Right ventricle myocardium inferior (tissue), 1 donor: ENCODE measurements at regions of chr5 and their contacts with region 1.

Region 1: GRCh38 chr5:43389679-43390329 is 22.4 kb downstream of the CCL28 start:
- DNase-seq: no peak
- ATAC-seq: peak; percentile 93

Region 2: DNA sequence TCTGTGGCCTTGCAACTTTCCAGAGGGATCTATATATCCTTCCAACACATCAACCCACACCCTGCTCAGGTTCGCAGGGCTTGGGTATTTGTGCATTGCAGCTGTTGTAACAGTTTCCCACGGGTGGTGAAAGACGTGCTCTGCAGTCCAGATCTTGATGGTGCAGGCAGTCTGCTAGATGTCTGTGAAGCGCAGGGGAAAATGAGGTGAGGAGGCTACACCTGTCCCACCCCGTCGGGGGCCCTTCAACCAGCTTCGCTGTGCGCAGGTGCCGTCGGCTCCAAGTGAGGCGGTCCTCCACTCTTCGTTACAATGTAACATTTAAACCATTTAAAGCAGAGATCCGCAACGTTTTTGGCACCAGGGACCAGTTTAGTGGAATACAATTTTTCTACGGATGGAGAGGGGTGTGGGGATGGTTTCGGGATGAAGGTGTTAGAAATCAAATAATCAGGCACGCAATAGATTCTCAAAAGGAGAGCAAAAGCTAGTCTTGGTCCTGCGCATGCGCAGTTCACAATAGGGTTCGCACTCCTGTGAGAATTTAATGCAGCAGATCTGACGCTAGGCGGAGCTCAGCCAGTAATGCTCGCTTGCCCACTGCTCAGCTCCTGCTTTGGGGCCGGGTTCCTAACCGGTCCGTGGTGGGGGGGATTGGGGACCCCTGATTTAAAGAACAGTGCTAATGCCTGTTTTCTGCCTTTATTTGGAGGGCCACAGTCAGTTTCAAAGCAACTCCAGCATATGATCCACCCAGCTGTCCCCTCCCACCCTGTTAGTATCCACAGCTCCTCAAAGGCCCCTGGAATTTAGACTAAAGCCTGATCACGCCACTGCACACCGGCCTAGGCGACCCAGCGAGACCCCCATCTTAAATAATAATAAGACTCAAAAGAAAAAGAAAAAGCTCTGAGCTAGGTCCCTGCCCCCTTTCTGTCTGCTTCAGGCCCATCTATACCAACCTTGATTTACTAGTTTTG is 481.0 kb before region 1 on chr5:
- intact Hi-C with region 1: loop called (anchors 2 kb)
- DNase-seq: peak; percentile 96
- ATAC-seq: peak; percentile 93

Region 3: GRCh38 chr5:43105369-43106289 is 284.2 kb before region 1 on chr5:
- intact Hi-C with region 1: loop called (anchors 5 kb)
- DNase-seq: peak; percentile 91
- ATAC-seq: peak; percentile 95

Region 4: GRCh38 chr5:43227655-43228054 is 162.1 kb before region 1 on chr5:
- intact Hi-C with region 1: loop called (anchors 2 kb)
- DNase-seq: no peak
- ATAC-seq: no peak

Region 5: GRCh38 chr5:43294226-43294625 is 95.6 kb before region 1 on chr5:
- intact Hi-C with region 1: no loop called
- DNase-seq: no peak
- ATAC-seq: no peak